ENCODE measurements at regions of chr5 and their contacts with region 1.

Region 1: DNA sequence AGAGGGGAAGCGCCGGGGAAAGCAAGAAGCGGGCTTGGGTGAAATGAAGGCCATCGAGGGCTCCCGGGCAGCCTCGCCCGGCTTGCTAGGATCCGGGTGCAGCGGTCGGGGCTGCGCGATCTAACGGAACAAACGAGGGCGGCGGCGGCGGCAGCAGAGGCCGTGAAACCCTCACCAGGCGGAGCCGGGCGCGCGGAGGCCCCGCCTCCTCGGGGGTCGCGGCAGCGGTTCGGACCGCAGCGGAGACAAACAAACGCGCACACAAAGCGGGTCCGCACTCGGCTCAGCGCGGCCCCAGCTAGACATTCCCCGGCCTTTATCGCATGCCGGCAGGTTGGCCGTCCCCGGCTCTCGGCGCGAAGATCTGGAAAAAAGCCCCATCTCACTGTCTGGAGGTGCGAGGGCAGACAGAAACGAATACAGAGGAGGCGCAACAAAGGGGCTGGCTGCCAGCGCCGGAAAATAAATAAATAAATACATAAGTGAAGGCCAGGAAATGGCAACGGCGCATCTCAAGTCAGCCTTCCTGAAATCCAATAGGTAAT is 10.5 kb upstream of the TRIM36 start:
- DNase-seq: peak in 6 of 35 experiments; percentile 12 to 41 (median 17)
- ATAC-seq: peak; percentile 63 to 79 (median 69)
- H3K4me3 ChIP-seq: peak overlapping the region; percentile 37 to 69
- H3K4me3 Mint-ChIP-seq: peak overlapping the region; percentile 74 to 90 (median 74)
- H3K27ac ChIP-seq: no peak overlapping the region
- H3K27ac Mint-ChIP-seq: no peak overlapping the region
- H3K4me1 ChIP-seq: peaks cover 2 to 17% of the 10 kb centered on the region in 2 experiments
- H3K4me1 Mint-ChIP-seq: peaks cover 7 to 13% (median 11%) of the 10 kb centered on the region in 3 donors
- H3K27me3 ChIP-seq: peaks cover 31 to 42% of the 10 kb centered on the region in 2 experiments
- H3K27me3 Mint-ChIP-seq: peaks cover 72 to 74% of the 10 kb centered on the region in 2 donors

Region 2: GRCh38 chr5:115151208-115151805 is 28.9 kb before region 1 on chr5:
- CTCF ChIA-PET with region 1: no interaction called
- POLR2A ChIA-PET with region 1: no interaction called
- DNase-seq: no peak
- ATAC-seq: no peak
- H3K4me3 ChIP-seq: no peak overlapping the region
- H3K4me3 Mint-ChIP-seq: no peak overlapping the region
- H3K27ac ChIP-seq: no peak overlapping the region
- H3K27ac Mint-ChIP-seq: no peak overlapping the region
- H3K4me1 ChIP-seq: no peaks in the 10 kb centered on the region
- H3K4me1 Mint-ChIP-seq: no peaks in the 10 kb centered on the region
- H3K27me3 ChIP-seq: peaks cover 0 to 20% of the 10 kb centered on the region in 2 experiments
- H3K27me3 Mint-ChIP-seq: peaks cover 48 to 56% of the 10 kb centered on the region in 2 donors

Region 3: GRCh38 chr5:115202952-115203351 is 22.7 kb after region 1 on chr5:
- CTCF ChIA-PET with region 1: interaction called in 1 of 2 experiments, 4 read pairs
- POLR2A ChIA-PET with region 1: interaction called in 1 of 2 experiments, 10 read pairs
- DNase-seq: no peak
- ATAC-seq: no peak
- H3K4me3 ChIP-seq: no peak overlapping the region
- H3K4me3 Mint-ChIP-seq: no peak overlapping the region
- H3K27ac ChIP-seq: no peak overlapping the region
- H3K27ac Mint-ChIP-seq: no peak overlapping the region
- H3K4me1 ChIP-seq: no peaks in the 10 kb centered on the region
- H3K4me1 Mint-ChIP-seq: peaks cover 0 to 6% (median 0%) of the 10 kb centered on the region in 3 donors
- H3K27me3 ChIP-seq: no peaks in the 10 kb centered on the region
- H3K27me3 Mint-ChIP-seq: no peaks in the 10 kb centered on the region

Region 4: GRCh38 chr5:116982035-116982434 is 1801.8 kb after region 1 on chr5:
- CTCF ChIA-PET with region 1: no interaction called
- POLR2A ChIA-PET with region 1: no interaction called
- DNase-seq: no peak
- ATAC-seq: no peak
- H3K4me3 ChIP-seq: no peak overlapping the region
- H3K4me3 Mint-ChIP-seq: no peak overlapping the region
- H3K27ac ChIP-seq: no peak overlapping the region
- H3K27ac Mint-ChIP-seq: no peak overlapping the region
- H3K4me1 ChIP-seq: no peaks in the 10 kb centered on the region
- H3K4me1 Mint-ChIP-seq: no peaks in the 10 kb centered on the region
- H3K27me3 ChIP-seq: no peaks in the 10 kb centered on the region
- H3K27me3 Mint-ChIP-seq: no peaks in the 10 kb centered on the region